ENCODE measurements at regions of chr11 and their contacts with region 1.

Region 1: GRCh38 chr11:18105802-18106574 is at the start of gene SAAL1:
- DNase-seq: peak; percentile 88
- H3K4me3 ChIP-seq: peak within 1 kb of the TSS; percentile 98
- H3K27ac ChIP-seq: no peak within 1 kb of the TSS
- H3K4me1 ChIP-seq: no peaks in the 10 kb centered on the region
- H3K27me3 ChIP-seq: no peaks in the 10 kb centered on the region
- CTCF ChIP-seq: peak; percentile 70
- total RNA-seq, gene SAAL1: 11.5 to 22.2 TPM

Region 2: GRCh38 chr11:17991783-17992433 is 114.1 kb before region 1 on chr11:
- intact Hi-C with region 1: loop called (anchors 5 kb)
- DNase-seq: peak; percentile 40
- H3K4me3 ChIP-seq: no peak overlapping the region
- H3K27ac ChIP-seq: no peak overlapping the region
- H3K4me1 ChIP-seq: no peaks in the 10 kb centered on the region
- H3K27me3 ChIP-seq: no peaks in the 10 kb centered on the region
- CTCF ChIP-seq: peak; percentile 76